Panc1 (cell line): ENCODE measurements at regions of chr9 and their contacts with region 1.

Region 1: DNA sequence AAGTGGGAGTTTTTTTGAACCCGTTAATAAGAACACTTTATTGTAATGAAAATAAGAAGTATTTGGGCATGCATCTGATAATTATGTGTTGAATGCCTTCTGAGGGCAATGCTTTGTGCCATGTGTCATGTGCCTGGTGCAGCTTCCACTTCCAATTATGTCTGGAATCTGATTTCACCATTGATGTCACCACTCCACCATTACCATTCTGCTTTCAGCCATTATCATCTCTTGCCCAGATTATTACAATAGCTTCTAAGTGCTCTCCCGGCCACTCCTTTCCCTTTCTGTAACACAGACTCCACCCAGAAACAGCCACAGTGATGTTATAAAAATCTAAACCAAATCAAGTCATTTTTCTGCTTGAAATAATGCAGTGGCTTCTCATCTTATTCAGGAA is 171.7 kb downstream of the C9orf152 start:
- DNase-seq: no peak
- ATAC-seq: no peak
- H3K4me3 ChIP-seq: no peak overlapping the region
- H3K27ac ChIP-seq: no peak overlapping the region
- H3K4me1 ChIP-seq: no peaks in the 10 kb centered on the region
- H3K27me3 ChIP-seq: no peaks in the 10 kb centered on the region
- CTCF ChIP-seq: no peak

Region 2: DNA sequence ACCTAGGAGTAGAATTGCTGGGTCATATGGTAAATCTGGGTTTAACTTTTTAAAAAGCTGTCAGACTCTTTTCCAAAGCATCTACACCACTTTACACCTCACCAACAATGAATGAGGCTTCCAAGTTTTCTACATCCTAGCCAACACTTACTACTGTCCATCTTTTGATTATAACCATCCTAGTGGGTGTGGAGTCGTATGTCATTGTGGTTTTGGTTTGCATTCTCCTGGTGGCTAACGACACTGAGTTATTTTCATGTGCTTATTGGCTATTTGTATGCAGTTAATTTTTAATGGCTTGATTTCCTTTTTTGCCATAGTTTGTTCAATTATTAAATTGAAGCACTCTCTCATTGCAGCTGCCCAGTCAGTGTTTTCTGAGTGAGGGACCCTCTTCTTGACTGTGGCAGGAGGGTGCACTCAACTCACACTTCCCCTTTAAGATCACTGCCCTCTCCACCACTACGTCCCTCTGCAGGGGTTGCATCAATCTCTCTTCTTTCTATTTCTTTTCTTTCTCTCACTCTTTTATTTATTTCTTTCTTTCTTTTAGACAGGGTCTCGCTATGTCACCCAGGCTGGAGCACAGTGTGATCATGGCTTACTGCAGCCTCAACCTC is 10.6 kb before region 1 on chr9:
- CTCF ChIA-PET with region 1: no interaction called
- POLR2A ChIA-PET with region 1: interaction called, 10 read pairs
- in situ Hi-C with region 1: no loop called
- intact Hi-C with region 1: no loop called
- DNase-seq: no peak
- ATAC-seq: no peak
- H3K4me3 ChIP-seq: no peak overlapping the region
- H3K27ac ChIP-seq: no peak overlapping the region
- H3K4me1 ChIP-seq: no peaks in the 10 kb centered on the region
- H3K27me3 ChIP-seq: no peaks in the 10 kb centered on the region
- CTCF ChIP-seq: no peak